ENCODE measurements at regions of chr10 and their contacts with region 1.

Region 1: DNA sequence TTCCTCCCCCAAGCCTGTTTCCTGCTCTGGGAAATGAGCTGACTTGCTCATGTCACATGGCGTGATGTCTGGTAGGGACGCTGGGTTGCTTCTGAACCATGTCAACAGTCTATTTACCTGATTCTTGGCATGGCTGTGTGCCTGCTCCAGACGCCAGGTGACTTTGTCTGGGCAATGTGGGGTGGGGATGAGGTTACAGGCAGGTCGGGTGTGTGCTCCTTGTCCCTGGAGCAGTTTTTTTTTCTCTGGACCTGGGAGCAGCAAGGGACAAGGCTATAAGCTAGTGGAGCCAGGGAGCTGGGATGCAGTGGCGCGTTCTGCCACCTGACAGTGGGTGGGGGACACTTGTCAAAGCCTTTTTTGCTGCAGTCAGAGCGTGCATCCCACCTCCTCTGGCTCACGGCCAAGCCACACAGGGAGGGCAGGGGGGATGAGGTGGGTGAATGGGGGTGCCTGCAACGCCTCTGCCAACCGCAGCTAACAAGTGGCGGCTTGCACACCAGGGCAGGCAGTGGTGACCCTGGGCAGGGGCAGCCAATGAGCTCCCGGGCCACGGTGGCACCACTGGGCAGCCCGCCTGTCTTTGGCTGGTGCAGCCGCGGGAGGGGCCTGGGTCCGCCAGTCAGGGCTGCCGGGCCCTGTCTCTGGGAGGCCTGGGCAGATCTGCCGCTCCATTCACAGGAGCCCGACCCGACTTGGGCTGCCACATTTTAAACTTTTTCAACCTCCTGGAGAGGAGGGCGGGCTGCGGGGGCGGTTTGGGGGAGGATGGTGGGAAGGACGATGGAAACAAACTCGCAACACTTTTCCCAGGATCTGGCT is 22.9 kb downstream of the DNAJB12 start:
- DNase-seq: peak; percentile 77 to 94 (median 91)
- ATAC-seq: peak; percentile 84
- H3K4me3 ChIP-seq: peak overlapping the region; percentile 61
- H3K4me3 Mint-ChIP-seq: peak overlapping the region; percentile 76 to 93 (median 84)
- H3K27ac ChIP-seq: peak overlapping the region; percentile 79
- H3K27ac Mint-ChIP-seq: peak overlapping the region; percentile 94 to 99 (median 98)
- H3K4me1 ChIP-seq: peaks cover 84 to 94% of the 10 kb centered on the region in 2 donors
- H3K4me1 Mint-ChIP-seq: peaks cover 52 to 95% (median 90%) of the 10 kb centered on the region in 7 donors
- H3K27me3 ChIP-seq: no peaks in the 10 kb centered on the region
- H3K27me3 Mint-ChIP-seq: no peaks in the 10 kb centered on the region

Region 2: DNA sequence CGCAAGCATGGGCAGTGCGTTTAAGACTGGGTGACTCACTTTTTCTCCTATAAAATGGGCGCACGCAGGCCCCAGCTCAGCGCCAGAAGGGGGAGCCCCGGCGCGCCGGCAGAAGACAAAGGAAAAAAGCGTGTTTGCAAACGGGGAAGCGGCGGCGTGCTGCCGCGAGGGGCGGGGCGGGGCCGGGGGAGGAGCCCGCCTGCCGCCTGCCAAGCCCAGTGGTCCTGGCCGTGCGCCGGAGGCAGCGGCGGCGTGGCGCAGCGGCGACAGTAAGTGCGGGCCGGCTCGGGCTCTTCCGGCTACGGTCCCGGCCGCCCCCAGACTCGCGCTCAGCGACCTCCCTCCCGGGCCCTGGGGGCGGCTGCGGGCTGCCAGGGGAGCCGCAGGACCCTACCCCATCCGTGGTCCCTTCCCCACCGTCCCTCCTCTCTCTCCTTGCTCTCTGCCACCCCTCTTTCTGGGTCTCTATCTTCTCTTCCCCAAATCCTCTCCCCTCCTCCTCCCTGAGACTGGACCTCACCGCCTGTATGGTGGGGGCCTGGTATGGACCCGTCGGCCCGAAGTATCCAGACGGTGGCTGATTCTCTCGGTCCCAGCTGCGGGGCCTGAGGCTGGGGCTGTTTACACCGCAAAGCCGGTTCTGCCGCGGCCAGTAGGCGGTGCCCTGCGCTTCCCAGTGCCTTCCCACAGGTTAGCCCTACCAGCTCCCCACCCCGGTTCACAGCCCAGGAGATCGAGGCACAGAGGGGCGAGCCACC is 1012.6 kb before region 1 on chr10 and contains the start of gene SLC29A3:
- CTCF ChIA-PET with region 1: no interaction called
- POLR2A ChIA-PET with region 1: no interaction called
- intact Hi-C with region 1: loop called in 1 of 2 experiments (anchors 5 kb)
- DNase-seq: peak; percentile 45 to 85 (median 70)
- ATAC-seq: peak; percentile 91
- H3K4me3 ChIP-seq: peak within 1 kb of the TSS; percentile 81
- H3K4me3 Mint-ChIP-seq: peak within 1 kb of the TSS; percentile 85 to 97 (median 94)
- H3K27ac ChIP-seq: peak within 1 kb of the TSS; percentile 62
- H3K27ac Mint-ChIP-seq: peak within 1 kb of the TSS; percentile 71 to 94 (median 85)
- H3K4me1 ChIP-seq: peaks cover 5 to 10% of the 10 kb centered on the region in 2 donors
- H3K4me1 Mint-ChIP-seq: peaks cover 27 to 53% (median 40%) of the 10 kb centered on the region in 7 donors
- H3K27me3 ChIP-seq: no peaks in the 10 kb centered on the region
- H3K27me3 Mint-ChIP-seq: no peaks in the 10 kb centered on the region
- total RNA-seq, gene SLC29A3: 3.5 to 7.2 (median 5.1) TPM

Region 3: GRCh38 chr10:71957546-71958275 is 374.1 kb before region 1 on chr10:
- CTCF ChIA-PET with region 1: no interaction called
- POLR2A ChIA-PET with region 1: no interaction called
- intact Hi-C with region 1: loop called in 1 of 2 experiments (anchors 1 kb)
- DNase-seq: no peak
- ATAC-seq: no peak
- H3K4me3 ChIP-seq: no peak overlapping the region
- H3K4me3 Mint-ChIP-seq: no peak overlapping the region
- H3K27ac ChIP-seq: no peak overlapping the region
- H3K27ac Mint-ChIP-seq: no peak overlapping the region
- H3K4me1 ChIP-seq: no peaks in the 10 kb centered on the region
- H3K4me1 Mint-ChIP-seq: peaks cover 0 to 3% (median 0%) of the 10 kb centered on the region in 7 donors
- H3K27me3 ChIP-seq: no peaks in the 10 kb centered on the region
- H3K27me3 Mint-ChIP-seq: peaks cover 11 to 49% (median 13%) of the 10 kb centered on the region in 5 donors

Region 4: GRCh38 chr10:72126184-72126871 is 205.5 kb before region 1 on chr10:
- CTCF ChIA-PET with region 1: interaction called, 53 read pairs
- POLR2A ChIA-PET with region 1: interaction called, 14 read pairs
- intact Hi-C with region 1: loop called (anchors 1 to 2 kb)
- DNase-seq: peak in 1 of 9 donors; percentile 16
- ATAC-seq: no peak
- H3K4me3 ChIP-seq: no peak overlapping the region
- H3K4me3 Mint-ChIP-seq: no peak overlapping the region
- H3K27ac ChIP-seq: no peak overlapping the region
- H3K27ac Mint-ChIP-seq: peak overlapping the region in 4 of 9 donors; percentile 5 to 63 (median 18)
- H3K4me1 ChIP-seq: peaks cover 5 to 10% of the 10 kb centered on the region in 2 donors
- H3K4me1 Mint-ChIP-seq: peaks cover 18 to 54% (median 42%) of the 10 kb centered on the region in 7 donors
- H3K27me3 ChIP-seq: no peaks in the 10 kb centered on the region
- H3K27me3 Mint-ChIP-seq: no peaks in the 10 kb centered on the region

Region 5: GRCh38 chr10:72248468-72249151 is 83.2 kb before region 1 on chr10:
- CTCF ChIA-PET with region 1: interaction called, 4 read pairs
- POLR2A ChIA-PET with region 1: interaction called, 25 read pairs
- intact Hi-C with region 1: loop called (anchors 1 kb)
- DNase-seq: peak; percentile 34 to 92 (median 83)
- ATAC-seq: peak; percentile 95
- H3K4me3 ChIP-seq: peak overlapping the region; percentile 59
- H3K4me3 Mint-ChIP-seq: peak overlapping the region; percentile 80 to 98 (median 84)
- H3K27ac ChIP-seq: peak overlapping the region; percentile 68
- H3K27ac Mint-ChIP-seq: peak overlapping the region; percentile 87 to 99 (median 96)
- H3K4me1 ChIP-seq: peaks cover 62 to 89% of the 10 kb centered on the region in 2 donors
- H3K4me1 Mint-ChIP-seq: peaks cover 63 to 89% (median 83%) of the 10 kb centered on the region in 7 donors
- H3K27me3 ChIP-seq: no peaks in the 10 kb centered on the region
- H3K27me3 Mint-ChIP-seq: no peaks in the 10 kb centered on the region

Region 6: DNA sequence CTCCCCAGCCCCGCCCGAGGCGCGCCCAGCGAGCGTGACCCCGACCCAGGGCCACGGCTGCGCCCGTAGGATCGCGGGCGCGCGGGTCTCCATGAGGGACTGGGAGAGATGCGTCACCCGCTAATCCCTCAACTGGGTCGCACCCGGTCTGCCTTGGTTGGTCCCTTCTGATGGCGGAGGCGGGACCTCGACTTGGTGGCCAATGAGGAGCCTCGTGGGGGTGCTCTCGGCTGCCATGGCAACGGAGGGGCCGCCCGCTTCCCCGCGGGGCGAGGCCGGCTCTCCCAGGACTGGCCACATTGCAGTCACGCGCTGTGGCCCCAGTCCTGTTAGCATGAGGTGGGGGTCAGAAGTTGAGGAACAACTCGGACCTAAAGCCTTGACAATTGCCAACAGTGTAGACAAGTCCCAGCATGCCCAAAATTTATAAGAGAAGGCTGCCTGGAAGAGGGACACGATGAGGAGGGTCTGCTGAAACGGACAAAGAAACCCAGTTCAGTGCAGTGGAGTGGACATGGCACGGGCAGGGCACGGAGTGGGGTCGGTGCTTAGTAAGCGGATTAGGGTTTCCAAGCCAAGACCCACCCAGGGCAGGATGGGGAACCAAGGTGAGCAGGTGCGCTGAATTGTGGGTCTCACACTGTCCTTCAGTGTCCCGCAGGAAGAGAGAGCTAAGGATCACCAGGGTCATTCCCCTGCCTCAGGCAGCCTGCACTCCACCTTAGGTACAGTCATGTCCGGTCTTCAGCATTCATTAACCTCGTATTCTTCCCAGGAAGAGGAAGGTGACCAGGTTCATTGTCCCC is 33.6 kb before region 1 on chr10:
- CTCF ChIA-PET with region 1: interaction called, 7 read pairs
- POLR2A ChIA-PET with region 1: interaction called, 10 read pairs
- intact Hi-C with region 1: loop called (anchors 1 kb)
- DNase-seq: peak; percentile 68 to 90 (median 78)
- ATAC-seq: peak; percentile 76
- H3K4me3 ChIP-seq: peak overlapping the region; percentile 69
- H3K4me3 Mint-ChIP-seq: peak overlapping the region; percentile 27 to 89 (median 84)
- H3K27ac ChIP-seq: peak overlapping the region; percentile 80
- H3K27ac Mint-ChIP-seq: peak overlapping the region; percentile 97 to 100 (median 99)
- H3K4me1 ChIP-seq: peaks cover 29 to 30% of the 10 kb centered on the region in 2 donors
- H3K4me1 Mint-ChIP-seq: peaks cover 18 to 61% (median 55%) of the 10 kb centered on the region in 7 donors
- H3K27me3 ChIP-seq: no peaks in the 10 kb centered on the region
- H3K27me3 Mint-ChIP-seq: no peaks in the 10 kb centered on the region